Activated CD4-positive, alpha-beta memory T cell treated with anti-CD3 and anti-CD28 coated beads for 36 hours (primary cell): ENCODE measurements at regions of chr6 and their contacts with region 1.

Region 1: DNA sequence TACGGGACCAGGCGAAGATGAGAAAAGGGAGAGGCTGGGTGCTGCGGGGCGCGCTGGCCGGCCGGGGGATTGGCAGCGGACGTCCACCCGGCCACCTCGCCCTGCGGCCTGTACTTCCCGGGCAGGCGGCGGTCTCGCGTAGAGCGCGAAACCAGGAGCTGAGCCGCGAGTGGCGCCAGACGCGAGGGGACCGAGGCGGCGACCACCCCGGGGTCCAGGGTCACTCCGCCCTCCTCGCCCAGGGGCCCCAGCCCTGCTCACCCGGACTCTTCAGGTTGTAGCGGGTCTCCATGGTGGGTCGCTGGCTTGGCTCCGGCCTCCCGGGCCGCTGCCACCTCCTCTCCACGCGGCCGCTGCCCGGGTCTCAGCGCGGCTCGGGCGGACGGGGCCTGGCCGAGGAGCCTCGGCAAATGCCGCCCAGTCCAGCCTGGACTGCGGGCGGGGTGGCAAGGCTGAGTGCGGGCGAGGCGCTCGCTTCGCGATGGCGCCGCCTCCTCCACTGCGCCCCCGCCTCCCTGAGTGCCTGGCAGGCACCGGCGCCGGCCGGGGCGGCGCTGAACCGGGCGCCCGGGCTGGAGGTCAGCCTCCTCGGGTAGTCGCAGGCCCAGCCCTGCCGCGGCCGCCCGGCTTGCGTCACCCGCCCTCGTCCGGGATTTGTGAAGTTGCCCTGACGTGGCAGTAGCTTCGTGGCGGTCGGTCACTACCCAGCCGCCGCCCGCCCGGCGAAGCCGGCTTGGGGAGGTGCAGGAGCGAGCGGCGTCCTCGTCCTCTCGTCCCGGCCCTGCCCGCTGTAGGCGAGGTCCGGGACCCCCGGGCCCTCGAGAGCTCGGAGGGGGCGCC is at the start of gene UBE2J1:
- DNase-seq: peak; percentile 85
- H3K4me3 Mint-ChIP-seq: peak within 1 kb of the TSS; percentile 91
- H3K27ac Mint-ChIP-seq: peak within 1 kb of the TSS; percentile 84
- H3K4me1 Mint-ChIP-seq: peaks cover 75% of the 10 kb centered on the region
- H3K27me3 Mint-ChIP-seq: no peaks in the 10 kb centered on the region
- total RNA-seq, gene UBE2J1: 23.8 to 24.9 TPM

Region 2: GRCh38 chr6:88963139-88964090 is 389.1 kb before region 1 on chr6 and contains the start of gene RNGTT:
- CTCF ChIA-PET with region 1: interaction called, 3 read pairs
- POLR2A ChIA-PET with region 1: no interaction called
- intact Hi-C with region 1: loop called (anchors 5 kb)
- DNase-seq: peak; percentile 99
- H3K4me3 Mint-ChIP-seq: peak within 1 kb of the TSS; percentile 96
- H3K27ac Mint-ChIP-seq: peak within 1 kb of the TSS; percentile 84
- H3K4me1 Mint-ChIP-seq: peaks cover 39% of the 10 kb centered on the region
- H3K27me3 Mint-ChIP-seq: no peaks in the 10 kb centered on the region
- total RNA-seq, gene RNGTT: 21.3 to 22.0 TPM

Region 3: DNA sequence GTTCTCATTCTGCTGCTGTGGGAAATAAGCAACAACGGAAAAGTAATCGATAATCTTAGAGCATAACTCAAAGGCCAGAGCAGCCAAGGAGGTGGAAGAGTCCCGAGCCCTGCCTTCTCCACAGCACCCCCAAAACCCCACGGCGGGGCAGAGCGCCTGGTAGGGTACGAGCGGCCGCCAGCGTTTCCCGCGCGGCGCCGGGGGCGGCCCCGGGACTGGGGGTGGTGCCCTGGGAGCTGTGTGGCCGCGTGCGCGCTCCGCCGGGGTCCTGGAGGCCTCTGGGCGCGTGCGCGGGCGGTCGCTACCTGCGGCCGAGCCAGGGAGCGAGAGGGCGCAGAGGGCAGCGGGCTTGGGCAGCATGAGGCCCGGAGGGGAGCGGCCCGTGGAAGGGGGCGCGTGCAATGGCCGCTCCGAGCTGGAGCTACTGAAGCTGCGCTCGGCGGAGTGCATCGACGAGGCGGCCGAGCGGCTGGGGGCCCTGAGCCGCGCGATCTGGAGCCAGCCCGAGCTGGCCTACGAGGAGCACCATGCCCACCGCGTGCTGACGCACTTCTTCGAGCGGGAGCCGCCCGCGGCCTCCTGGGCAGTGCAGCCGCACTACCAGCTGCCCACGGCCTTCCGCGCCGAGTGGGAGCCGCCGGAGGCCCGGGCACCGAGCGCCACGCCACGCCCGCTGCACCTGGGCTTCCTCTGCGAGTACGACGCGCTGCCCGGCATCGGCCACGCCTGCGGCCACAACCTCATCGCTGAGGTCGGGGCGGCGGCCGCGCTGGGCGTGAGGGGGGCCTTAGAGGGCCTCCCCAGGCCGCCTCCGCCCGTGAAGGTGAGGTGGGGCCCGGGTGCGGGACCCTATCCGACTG is 206.5 kb before region 1 on chr6 and contains the start of gene PM20D2:
- CTCF ChIA-PET with region 1: no interaction called
- POLR2A ChIA-PET with region 1: interaction called, 5 read pairs
- intact Hi-C with region 1: loop called (anchors 2 kb)
- DNase-seq: peak; percentile 71
- H3K4me3 Mint-ChIP-seq: peak within 1 kb of the TSS; percentile 85
- H3K27ac Mint-ChIP-seq: peak within 1 kb of the TSS; percentile 95
- H3K4me1 Mint-ChIP-seq: peaks cover 37% of the 10 kb centered on the region
- H3K27me3 Mint-ChIP-seq: no peaks in the 10 kb centered on the region
- total RNA-seq, gene PM20D2: 8.4 to 8.9 TPM

Region 4: DNA sequence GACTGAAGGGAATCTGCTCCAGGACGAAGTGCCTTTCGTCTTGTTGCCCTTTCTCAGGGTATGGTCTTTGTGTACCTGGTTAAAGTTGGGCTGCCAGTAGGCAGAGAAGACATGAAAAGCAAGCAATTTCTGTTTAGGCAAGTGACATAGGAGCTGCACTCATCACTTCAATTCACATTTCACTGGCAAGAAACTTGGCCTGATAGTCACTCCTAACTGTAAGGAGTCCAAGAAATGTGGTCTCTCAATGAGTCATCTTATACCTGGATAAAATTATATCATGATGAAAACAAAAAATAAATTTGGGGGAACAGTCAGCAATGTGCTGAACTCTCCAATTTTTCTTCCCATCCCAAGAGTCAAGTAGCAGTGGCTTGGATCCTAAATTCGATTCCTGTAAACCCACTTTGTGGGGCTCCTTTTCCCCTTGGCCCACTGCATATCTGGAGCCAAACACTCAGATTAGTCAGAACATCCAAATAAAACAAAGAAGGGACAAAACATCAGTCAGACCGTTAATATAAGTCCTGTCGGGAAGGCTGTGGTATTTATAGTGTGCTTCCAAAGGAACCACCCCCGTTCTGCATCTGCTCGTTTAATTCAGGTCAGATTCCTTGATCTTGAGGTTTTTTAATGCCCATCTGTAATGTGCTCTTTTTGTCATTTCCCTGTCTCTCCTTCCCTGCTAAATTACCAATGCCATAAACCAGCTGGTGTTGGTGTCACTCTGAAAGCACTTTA is 130.4 kb before region 1 on chr6:
- CTCF ChIA-PET with region 1: no interaction called
- POLR2A ChIA-PET with region 1: no interaction called
- intact Hi-C with region 1: no loop called
- DNase-seq: no peak
- H3K4me3 Mint-ChIP-seq: no peak overlapping the region
- H3K27ac Mint-ChIP-seq: no peak overlapping the region
- H3K4me1 Mint-ChIP-seq: no peaks in the 10 kb centered on the region
- H3K27me3 Mint-ChIP-seq: peaks cover 3% of the 10 kb centered on the region